Tibial artery (tissue), 4 donors: ENCODE measurements at regions of chr17 and their contacts with region 1.

Region 1: DNA sequence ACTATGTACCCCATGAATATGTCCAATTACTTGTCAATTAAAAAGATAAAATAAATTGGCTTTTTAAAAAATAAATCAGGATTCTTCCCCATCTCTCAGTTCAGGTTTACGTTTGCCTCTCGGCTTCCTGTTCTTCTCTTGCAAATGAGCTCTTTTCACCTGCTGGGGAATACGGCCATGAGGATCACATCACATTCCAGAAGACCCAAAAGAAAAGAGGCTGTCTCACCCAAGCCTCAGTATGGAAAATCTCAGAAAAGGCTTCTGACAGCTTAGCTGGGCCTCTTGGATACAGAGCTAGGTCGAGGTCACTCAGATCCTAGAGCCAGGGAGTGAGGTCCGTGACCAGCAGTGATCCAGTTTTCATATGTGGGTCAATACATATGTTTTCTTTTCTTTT is 171.2 kb upstream of the SDK2 start:
- DNase-seq: no peak
- H3K4me3 ChIP-seq: no peak overlapping the region
- H3K27ac ChIP-seq: no peak overlapping the region
- H3K4me1 ChIP-seq: no peaks in the 10 kb centered on the region
- H3K27me3 ChIP-seq: peaks cover 0 to 8% of the 10 kb centered on the region in 2 donors
- CTCF ChIP-seq: no peak

Region 2: GRCh38 chr17:73526952-73527351 is 288.5 kb before region 1 on chr17:
- intact Hi-C with region 1: loop called (anchors 5 kb)
- DNase-seq: no peak
- H3K4me3 ChIP-seq: no peak overlapping the region
- H3K27ac ChIP-seq: no peak overlapping the region
- H3K4me1 ChIP-seq: no peaks in the 10 kb centered on the region
- H3K27me3 ChIP-seq: no peaks in the 10 kb centered on the region
- CTCF ChIP-seq: no peak

Region 3: DNA sequence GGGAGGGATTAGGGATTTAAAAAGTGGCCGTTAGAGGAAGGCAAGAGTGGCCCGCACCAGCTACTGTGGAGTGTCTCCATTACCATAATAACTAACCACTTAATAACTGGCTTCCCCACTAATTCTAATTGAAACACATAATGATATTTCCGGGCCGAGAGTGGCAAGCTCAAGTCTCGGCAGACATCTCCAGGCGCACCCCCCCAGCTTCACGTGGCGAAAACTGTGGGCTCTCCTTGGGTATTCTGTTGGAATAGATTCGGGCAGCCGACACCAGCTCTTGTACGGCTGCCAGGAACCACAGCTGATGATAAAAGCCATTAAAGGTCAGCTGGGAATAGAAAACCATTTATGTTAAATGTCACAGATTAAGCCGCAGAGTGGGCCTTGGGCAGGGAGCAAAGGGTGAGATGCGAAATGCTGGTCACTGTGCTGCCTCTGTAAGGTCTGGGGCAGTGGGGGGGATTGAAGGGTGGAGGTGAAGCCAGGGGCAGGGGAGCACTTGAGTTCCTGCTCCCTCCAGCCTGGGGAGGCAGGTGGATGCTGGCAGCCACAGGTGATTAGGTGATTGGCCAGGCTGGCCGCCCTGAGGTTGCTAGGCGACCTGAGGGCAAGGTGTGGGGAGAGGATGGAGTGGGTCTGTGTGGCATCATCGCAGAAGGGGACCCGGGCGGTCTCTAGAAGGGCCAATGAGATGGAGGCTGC is 55.6 kb before region 1 on chr17:
- intact Hi-C with region 1: no loop called
- DNase-seq: no peak
- H3K4me3 ChIP-seq: no peak overlapping the region
- H3K27ac ChIP-seq: no peak overlapping the region
- H3K4me1 ChIP-seq: peaks cover 0 to 14% (median 3%) of the 10 kb centered on the region in 4 donors
- H3K27me3 ChIP-seq: peaks cover 0 to 18% of the 10 kb centered on the region in 2 donors
- CTCF ChIP-seq: no peak